H1 (cell line): ENCODE measurements at regions of chr22 and their contacts with region 1.

Region 1: DNA sequence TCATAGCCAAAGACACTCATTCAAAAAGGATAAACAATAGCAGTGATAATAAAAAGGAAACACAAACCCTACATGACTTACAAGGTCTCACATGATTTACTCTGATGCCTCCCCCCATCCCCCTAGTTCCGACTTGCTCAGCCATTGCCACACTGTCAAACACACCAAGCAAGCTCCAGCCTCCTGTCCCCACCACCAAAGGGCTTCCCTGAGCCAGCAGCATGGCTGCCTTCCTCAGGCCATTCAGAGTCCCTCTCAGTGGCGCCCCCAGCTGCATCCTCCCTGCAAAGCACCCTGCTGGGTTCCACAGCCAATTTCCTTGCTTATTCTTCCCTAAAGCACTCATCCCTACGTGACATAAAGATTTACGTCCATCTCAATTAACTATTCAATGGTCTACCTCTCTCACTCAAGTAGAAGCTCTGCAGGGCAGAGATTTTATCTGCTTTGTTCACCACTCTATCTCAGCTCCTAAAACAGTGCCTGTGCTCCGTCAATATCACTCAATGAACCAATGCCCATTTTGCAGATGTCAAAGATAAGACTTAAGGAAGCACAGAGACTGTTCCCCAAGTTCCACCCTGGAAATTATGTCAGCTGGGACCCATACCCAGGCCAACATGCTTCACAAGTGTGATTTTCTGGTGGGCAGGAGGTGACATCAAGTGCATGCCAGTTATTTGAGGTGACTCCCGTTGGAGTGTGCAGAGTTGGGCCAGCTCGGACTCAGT is 106.9 kb downstream of the SYN3 start:
- DNase-seq: peak; percentile 15 to 68
- H3K4me3 ChIP-seq: no peak overlapping the region
- H3K27ac ChIP-seq: no peak overlapping the region
- H3K4me1 ChIP-seq: peaks cover 0 to 3% (median 0%) of the 10 kb centered on the region in 4 experiments; a peak in 1 of 7 replicates
- H3K27me3 ChIP-seq: peaks cover 0 to 1% (median 0%) of the 10 kb centered on the region in 4 experiments; a peak in 1 of 7 replicates
- CTCF ChIP-seq: peak; percentile 41 to 76 (median 68)
- EP300 ChIP-seq: no peak
- POLR2A ChIP-seq: no peak
- RAD21 ChIP-seq: peak; percentile 21 to 45; a peak in 3 of 4 replicates

Region 2: GRCh38 chr22:32788909-32789624 is 162.2 kb before region 1 on chr22:
- CTCF ChIA-PET with region 1: no interaction called
- POLR2A ChIA-PET with region 1: no interaction called
- DNase-seq: no peak
- H3K4me3 ChIP-seq: no peak overlapping the region
- H3K27ac ChIP-seq: no peak overlapping the region
- H3K4me1 ChIP-seq: peaks cover 0 to 3% (median 0%) of the 10 kb centered on the region in 4 experiments; a peak in 2 of 7 replicates
- H3K27me3 ChIP-seq: no peaks in the 10 kb centered on the region
- CTCF ChIP-seq: no peak
- EP300 ChIP-seq: no peak
- POLR2A ChIP-seq: no peak
- RAD21 ChIP-seq: no peak

Region 3: DNA sequence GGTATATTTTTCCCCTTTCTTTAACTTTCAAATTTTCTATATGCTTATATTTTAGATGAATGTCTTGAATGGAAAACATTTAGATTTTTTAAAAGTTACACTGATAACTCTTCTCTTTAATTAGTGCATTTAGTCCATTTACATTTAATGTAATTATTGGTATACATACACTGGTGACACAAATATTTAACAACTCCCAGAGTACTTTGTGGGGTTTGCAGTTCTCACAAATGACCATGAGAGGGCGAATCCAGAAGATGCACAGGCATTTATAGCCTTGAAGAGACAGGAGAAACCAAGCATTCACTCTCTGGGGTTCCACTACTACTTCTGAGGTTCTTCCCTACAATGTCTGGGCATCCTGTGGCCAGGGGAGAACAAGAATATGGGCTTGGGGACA is 24.6 kb before region 1 on chr22:
- CTCF ChIA-PET with region 1: interaction called, 12 read pairs
- POLR2A ChIA-PET with region 1: no interaction called
- DNase-seq: peak in 1 of 2 experiments; percentile 54
- H3K4me3 ChIP-seq: no peak overlapping the region
- H3K27ac ChIP-seq: no peak overlapping the region
- H3K4me1 ChIP-seq: no peaks in the 10 kb centered on the region
- H3K27me3 ChIP-seq: no peaks in the 10 kb centered on the region
- CTCF ChIP-seq: peak in 2 of 3 experiments; percentile 62 to 65; a peak in 3 of 4 replicates
- EP300 ChIP-seq: no peak
- POLR2A ChIP-seq: no peak
- RAD21 ChIP-seq: peak; percentile 42 to 54; a peak in 3 of 4 replicates

Region 4: DNA sequence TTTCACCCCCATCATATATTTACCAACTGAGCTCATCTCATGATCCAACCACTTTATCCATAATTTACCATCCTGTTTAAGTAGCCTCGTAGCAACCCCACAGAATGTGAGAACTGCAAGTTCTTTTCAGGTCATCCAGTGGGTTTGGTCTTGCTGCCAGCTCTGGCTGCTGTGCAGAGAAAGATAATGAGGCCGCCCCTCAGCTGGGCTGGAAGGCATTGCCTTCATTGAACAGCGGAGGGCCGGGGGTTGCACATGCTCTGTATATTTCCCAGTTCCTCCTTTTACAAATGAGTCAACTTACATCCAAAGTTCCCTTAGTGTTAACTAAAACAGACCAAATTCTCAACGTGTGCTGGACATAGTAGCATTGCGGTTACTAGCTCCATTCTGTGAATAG is 10.3 kb after region 1 on chr22:
- CTCF ChIA-PET with region 1: interaction called, 24 read pairs
- POLR2A ChIA-PET with region 1: interaction called, 4 read pairs
- DNase-seq: no peak
- H3K4me3 ChIP-seq: no peak overlapping the region
- H3K27ac ChIP-seq: no peak overlapping the region
- H3K4me1 ChIP-seq: peaks cover 0 to 5% (median 2%) of the 10 kb centered on the region in 4 experiments; a peak in 1 of 7 replicates
- H3K27me3 ChIP-seq: no peaks in the 10 kb centered on the region
- CTCF ChIP-seq: no peak
- EP300 ChIP-seq: no peak
- POLR2A ChIP-seq: no peak
- RAD21 ChIP-seq: no peak